ENCODE measurements at regions of chr4 and their contacts with region 1.

Region 1: DNA sequence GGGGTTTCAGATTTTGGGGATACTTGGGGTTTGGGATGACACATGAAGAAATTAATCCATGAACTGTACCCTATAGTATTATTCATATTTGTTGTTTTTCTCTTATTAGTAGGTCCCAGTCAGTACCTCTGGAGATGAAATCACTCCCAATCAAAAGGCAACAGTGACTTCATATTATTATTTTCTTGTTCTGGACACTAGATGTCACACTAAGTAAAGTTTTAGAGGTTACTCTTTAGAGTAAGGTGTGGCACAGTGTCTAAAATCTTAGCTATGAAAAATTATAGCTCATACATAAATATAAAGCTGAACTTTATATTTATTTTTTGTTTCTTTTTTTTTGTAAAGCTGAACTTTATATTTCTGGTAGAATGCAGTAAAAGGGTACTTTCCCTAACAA is 35.1 kb downstream of the FAM114A1 start:
- DNase-seq: peak in 4 of 5 donors; percentile 40 to 60 (median 49)
- H3K4me3 ChIP-seq: no peak overlapping the region
- H3K4me3 Mint-ChIP-seq: no peak overlapping the region
- H3K27ac ChIP-seq: no peak overlapping the region
- H3K27ac Mint-ChIP-seq: no peak overlapping the region
- H3K4me1 ChIP-seq: no peaks in the 10 kb centered on the region
- H3K4me1 Mint-ChIP-seq: no peaks in the 10 kb centered on the region
- H3K27me3 ChIP-seq: no peaks in the 10 kb centered on the region
- H3K27me3 Mint-ChIP-seq: peaks cover 3 to 6% of the 10 kb centered on the region in 2 donors

Region 2: GRCh38 chr4:38759113-38759789 is 143.4 kb before region 1 on chr4:
- CTCF ChIA-PET with region 1: interaction called, 31 read pairs
- POLR2A ChIA-PET with region 1: no interaction called
- intact Hi-C with region 1: no loop called
- DNase-seq: peak; percentile 44 to 63 (median 55)
- H3K4me3 ChIP-seq: no peak overlapping the region
- H3K4me3 Mint-ChIP-seq: peak overlapping the region in 1 of 8 donors; percentile 39
- H3K27ac ChIP-seq: no peak overlapping the region
- H3K27ac Mint-ChIP-seq: peak overlapping the region in 1 of 7 donors; percentile 56
- H3K4me1 ChIP-seq: peaks cover 5% of the 10 kb centered on the region
- H3K4me1 Mint-ChIP-seq: peaks cover 5 to 10% (median 6%) of the 10 kb centered on the region in 4 donors
- H3K27me3 ChIP-seq: no peaks in the 10 kb centered on the region
- H3K27me3 Mint-ChIP-seq: no peaks in the 10 kb centered on the region

Region 3: DNA sequence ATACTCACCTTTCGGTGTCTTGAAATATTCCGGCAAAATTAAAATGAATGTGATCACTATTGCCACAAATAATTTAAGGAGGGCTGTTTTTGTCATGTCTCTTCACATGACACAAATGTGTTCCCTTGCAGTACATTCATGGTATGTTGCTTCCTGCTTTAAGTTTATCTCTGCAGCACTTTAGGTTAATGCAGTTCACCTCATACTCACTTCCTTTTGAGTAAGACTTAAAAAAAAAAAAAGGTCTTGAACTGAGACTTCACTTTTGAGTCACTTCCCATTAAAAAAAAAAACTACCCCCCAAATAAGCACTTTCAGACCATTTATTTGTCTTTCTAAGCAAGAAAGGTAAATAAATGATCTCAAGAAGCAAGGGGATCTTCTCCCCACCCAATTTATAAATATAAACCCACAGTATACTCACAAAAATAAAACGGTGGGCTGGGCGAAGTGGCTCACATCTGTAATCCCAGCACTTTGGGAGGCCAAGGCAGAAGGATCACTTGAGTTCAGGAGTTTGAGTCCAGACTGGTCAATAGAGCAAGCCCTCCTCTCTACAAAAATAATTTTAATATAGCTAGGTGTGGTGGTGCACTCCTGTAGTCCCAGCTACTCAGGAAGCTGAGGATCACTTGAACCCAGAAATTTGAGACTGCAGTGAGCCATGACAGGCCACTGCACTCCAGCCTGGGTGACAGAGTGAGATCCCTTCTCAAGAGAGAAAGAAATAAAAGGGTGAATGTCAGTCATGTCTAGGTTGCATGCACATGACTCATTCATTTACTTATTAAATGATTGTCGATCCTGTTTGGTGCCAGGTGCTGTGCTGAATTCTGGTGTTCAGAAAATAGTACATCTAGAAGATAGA is 129.8 kb after region 1 on chr4 and contains the start of gene TMEM156:
- CTCF ChIA-PET with region 1: interaction called, 4 read pairs
- POLR2A ChIA-PET with region 1: no interaction called
- intact Hi-C with region 1: loop called (anchors 5 kb)
- DNase-seq: peak; percentile 65 to 81 (median 70)
- H3K4me3 ChIP-seq: peak within 1 kb of the TSS; percentile 51 to 65
- H3K4me3 Mint-ChIP-seq: peak within 1 kb of the TSS; percentile 75 to 93 (median 89)
- H3K27ac ChIP-seq: peak within 1 kb of the TSS; percentile 68
- H3K27ac Mint-ChIP-seq: peak within 1 kb of the TSS; percentile 85 to 97 (median 93)
- H3K4me1 ChIP-seq: peaks cover 43% of the 10 kb centered on the region
- H3K4me1 Mint-ChIP-seq: peaks cover 20 to 55% (median 36%) of the 10 kb centered on the region in 4 donors
- H3K27me3 ChIP-seq: no peaks in the 10 kb centered on the region
- H3K27me3 Mint-ChIP-seq: no peaks in the 10 kb centered on the region
- total RNA-seq, gene TMEM156: 16.8 to 19.3 TPM

Region 4: GRCh38 chr4:39126256-39127095 is 223.8 kb after region 1 on chr4:
- CTCF ChIA-PET with region 1: interaction called, 242 read pairs
- POLR2A ChIA-PET with region 1: no interaction called
- intact Hi-C with region 1: no loop called
- DNase-seq: no peak
- H3K4me3 ChIP-seq: no peak overlapping the region
- H3K4me3 Mint-ChIP-seq: no peak overlapping the region
- H3K27ac ChIP-seq: no peak overlapping the region
- H3K27ac Mint-ChIP-seq: peak overlapping the region in 1 of 7 donors; percentile 37
- H3K4me1 ChIP-seq: no peaks in the 10 kb centered on the region
- H3K4me1 Mint-ChIP-seq: no peaks in the 10 kb centered on the region
- H3K27me3 ChIP-seq: no peaks in the 10 kb centered on the region
- H3K27me3 Mint-ChIP-seq: no peaks in the 10 kb centered on the region

Region 5: DNA sequence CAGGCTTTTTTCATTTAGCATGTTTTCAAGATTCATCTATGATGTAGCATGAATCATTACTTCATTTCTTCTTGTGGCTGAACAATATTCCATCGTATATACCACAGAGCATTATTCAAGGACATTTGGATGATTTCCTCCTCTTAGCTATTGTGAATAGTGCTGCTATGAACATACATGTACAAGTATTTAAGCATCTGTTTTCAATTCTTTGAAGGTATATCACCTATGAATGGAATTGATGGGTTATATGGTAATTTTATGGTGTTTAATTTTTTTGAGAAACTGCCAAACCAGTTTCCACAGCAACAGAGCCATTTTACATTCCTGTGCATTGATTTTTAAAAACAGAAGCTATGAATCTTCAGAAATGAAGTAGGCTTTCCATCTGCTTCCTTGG is 243.5 kb after region 1 on chr4:
- CTCF ChIA-PET with region 1: interaction called, 25 read pairs
- POLR2A ChIA-PET with region 1: no interaction called
- intact Hi-C with region 1: no loop called
- DNase-seq: no peak
- H3K4me3 ChIP-seq: no peak overlapping the region
- H3K4me3 Mint-ChIP-seq: no peak overlapping the region
- H3K27ac ChIP-seq: no peak overlapping the region
- H3K27ac Mint-ChIP-seq: no peak overlapping the region
- H3K4me1 ChIP-seq: no peaks in the 10 kb centered on the region
- H3K4me1 Mint-ChIP-seq: no peaks in the 10 kb centered on the region
- H3K27me3 ChIP-seq: no peaks in the 10 kb centered on the region
- H3K27me3 Mint-ChIP-seq: no peaks in the 10 kb centered on the region

Region 6: DNA sequence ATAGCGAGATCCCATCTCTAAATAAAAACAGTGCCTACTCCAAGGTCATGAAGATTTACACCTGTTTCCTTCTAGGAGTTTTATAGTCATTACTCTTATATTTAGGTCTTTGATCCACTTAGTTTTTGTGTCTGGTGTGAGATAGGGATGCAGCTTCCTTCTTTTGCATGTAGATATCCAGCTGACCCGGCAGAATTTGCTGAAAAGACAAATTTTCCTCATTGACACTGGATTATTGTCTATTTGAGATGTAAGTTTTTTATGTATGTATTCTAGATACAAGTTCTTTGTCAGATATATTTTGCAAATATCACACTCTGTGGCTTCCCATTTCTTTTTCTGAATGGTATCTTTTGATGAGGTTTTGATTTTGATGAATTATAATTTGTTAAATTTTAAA is 378.1 kb after region 1 on chr4:
- CTCF ChIA-PET with region 1: no interaction called
- POLR2A ChIA-PET with region 1: no interaction called
- intact Hi-C with region 1: loop called (anchors 5 kb)
- DNase-seq: no peak
- H3K4me3 ChIP-seq: no peak overlapping the region
- H3K4me3 Mint-ChIP-seq: no peak overlapping the region
- H3K27ac ChIP-seq: no peak overlapping the region
- H3K27ac Mint-ChIP-seq: peak overlapping the region in 2 of 7 donors; percentile 18 to 56
- H3K4me1 ChIP-seq: no peaks in the 10 kb centered on the region
- H3K4me1 Mint-ChIP-seq: no peaks in the 10 kb centered on the region
- H3K27me3 ChIP-seq: no peaks in the 10 kb centered on the region
- H3K27me3 Mint-ChIP-seq: no peaks in the 10 kb centered on the region